ENCODE measurements at regions of chr4 and their contacts with region 1.

Region 1: DNA sequence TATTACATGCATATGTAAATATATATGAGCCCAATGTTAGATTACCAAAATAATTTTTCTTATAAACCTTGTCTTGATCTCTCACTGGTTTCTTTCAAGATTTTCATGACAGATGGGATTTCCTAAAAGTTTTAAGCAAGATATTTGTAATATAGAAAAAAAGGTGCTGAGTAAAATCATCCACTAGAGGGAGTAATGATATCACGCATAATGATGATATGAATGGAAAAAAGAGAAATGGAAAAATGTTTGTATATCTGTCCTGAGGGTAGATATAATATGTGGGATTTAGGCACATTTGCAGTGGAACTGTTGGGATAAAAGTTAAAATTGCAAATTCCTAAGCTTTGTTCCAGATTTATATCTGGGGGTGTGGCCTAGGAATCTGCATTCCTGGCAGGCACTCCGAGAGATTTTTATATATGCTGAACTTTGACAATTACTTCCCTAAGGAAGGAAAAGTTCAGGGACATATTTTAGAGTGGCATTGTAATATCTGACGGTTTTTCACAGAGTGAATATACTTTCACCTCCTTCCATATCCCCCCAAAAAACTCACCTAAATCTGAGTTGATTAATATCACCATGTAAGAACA is 60.5 kb downstream of the TMA16 start:
- DNase-seq: no peak
- ATAC-seq: no peak
- H3K4me3 ChIP-seq: no peak overlapping the region
- H3K27ac ChIP-seq: no peak overlapping the region
- H3K4me1 ChIP-seq: no peaks in the 10 kb centered on the region
- H3K27me3 ChIP-seq: peaks cover 0 to 2% of the 10 kb centered on the region in 2 donors

Region 2: DNA sequence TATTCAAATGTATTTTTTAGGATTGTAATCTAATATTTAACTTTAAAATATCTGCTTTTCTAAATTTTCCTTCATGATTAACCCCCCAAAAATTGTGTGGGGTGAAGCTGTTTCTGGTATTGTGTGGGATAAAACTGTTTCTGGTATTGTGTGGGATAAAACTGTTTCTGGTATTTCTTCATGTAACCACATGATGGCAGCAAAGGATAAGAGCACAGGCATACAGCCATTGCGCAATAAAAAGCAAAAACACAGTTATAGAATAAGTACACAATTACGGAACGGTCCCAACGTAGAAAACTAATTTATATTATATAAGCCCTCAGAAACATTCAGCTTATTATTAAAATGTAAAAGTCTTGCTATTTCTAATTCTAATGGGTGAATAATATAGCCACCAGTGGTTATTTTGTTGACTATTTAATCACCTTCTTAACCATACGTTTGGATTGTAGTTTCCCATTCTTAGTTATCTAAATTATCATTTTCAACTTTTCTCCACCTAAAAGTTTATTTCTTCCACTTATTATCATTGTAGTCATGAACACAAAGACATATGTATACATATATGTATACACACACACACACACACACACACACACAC is 1057.3 kb before region 1 on chr4:
- intact Hi-C with region 1: loop called in 1 of 2 experiments (anchors 5 kb)
- DNase-seq: no peak
- ATAC-seq: peak; percentile 88
- H3K4me3 ChIP-seq: no peak overlapping the region
- H3K27ac ChIP-seq: no peak overlapping the region
- H3K4me1 ChIP-seq: no peaks in the 10 kb centered on the region
- H3K27me3 ChIP-seq: no peaks in the 10 kb centered on the region

Region 3: DNA sequence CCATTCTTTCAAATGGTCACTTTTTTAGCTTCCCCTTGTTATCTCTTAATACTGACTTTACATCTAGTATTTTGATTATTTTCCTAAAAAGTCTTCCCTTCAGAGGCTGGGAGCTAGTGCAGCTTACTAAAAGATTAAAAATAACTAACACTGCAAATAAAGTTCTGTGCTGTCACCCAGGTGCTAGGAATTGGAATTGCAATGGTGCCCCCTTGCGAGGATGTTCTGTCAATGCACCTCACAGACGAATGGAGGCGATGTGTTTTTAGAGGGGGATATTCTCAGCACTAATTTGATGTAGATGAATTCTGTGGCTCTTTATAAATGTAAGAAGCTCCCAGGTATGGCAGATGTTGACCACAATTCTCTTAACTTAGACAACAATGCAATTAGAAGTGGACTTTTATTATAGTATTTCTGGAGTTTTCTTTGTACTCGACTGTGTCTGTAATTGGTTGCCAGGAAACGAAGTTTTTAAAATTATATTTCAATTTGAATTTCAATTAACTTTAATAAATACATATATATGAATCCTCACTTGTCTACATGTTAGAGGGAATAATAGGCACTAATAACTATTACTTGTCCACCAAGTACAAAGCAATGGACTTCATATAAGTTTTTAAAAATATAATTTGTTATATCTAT is 1177.0 kb after region 1 on chr4:
- intact Hi-C with region 1: loop called in 1 of 2 experiments (anchors 5 kb)
- DNase-seq: no peak
- ATAC-seq: no peak
- H3K4me3 ChIP-seq: no peak overlapping the region
- H3K27ac ChIP-seq: no peak overlapping the region
- H3K4me1 ChIP-seq: no peaks in the 10 kb centered on the region
- H3K27me3 ChIP-seq: no peaks in the 10 kb centered on the region

Region 4: DNA sequence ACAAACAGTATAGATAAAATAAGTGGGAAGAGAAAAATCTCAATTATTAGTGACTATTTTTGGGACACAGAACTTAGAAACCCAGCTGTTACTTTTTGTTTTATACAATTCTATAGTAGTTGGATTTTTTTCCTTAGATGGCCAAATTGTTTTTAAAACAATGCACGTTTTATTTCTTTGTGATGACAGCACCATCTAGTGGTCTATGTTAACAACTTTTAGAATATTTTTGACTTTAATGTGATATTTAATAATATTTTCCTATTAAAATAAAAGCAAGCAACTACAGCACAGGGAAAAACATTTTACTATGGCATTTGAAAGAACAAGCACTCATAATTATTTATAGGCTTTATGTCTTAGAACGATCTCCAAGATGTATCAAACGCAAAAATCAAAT is 1193.4 kb after region 1 on chr4:
- intact Hi-C with region 1: loop called (anchors 5 to 10 kb)
- DNase-seq: no peak
- ATAC-seq: no peak
- H3K4me3 ChIP-seq: no peak overlapping the region
- H3K27ac ChIP-seq: no peak overlapping the region
- H3K4me1 ChIP-seq: no peaks in the 10 kb centered on the region
- H3K27me3 ChIP-seq: no peaks in the 10 kb centered on the region